Breast epithelium (tissue), 4 donors: ENCODE measurements at regions of chr18 and their contacts with region 1.

Region 1: DNA sequence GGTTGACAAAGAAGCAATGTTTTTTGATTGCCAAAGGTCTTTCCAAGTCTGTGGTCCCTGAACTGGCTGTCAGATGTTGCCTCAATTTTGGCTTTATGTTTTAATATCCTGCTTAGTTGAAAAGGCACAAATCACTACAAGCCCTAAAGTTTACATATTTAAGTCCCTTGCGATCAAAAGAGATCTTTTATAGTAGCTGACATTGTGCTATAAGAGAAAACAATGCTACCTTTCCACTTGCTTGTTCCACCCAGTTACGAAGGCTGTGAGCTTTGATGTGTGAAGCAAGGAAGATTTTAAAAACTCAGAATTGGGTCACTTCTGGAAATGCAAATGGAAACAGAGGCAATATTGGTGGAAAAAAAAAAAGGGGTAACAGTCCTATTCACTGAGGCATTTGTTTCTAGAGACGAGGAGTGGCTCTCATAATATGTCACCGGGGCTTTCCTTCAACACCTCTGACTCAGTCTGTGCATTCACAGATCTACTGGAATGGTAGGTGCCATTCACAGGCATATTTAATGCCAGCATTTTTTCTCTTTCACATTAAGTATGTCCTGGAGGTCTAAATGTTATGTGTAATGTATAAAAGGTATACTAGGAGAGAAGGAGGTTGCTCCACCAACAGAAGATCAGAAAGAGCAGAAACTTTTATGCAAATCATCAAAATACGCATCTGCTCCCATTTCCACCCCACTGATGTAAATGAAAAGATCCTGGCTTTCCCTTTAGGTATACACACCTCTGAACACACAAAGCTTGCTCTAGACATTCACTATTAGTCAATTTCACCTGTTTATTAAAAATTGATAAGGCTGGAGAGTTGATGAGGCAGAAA is 91.8 kb downstream of the TGIF1 start:
- DNase-seq: no peak
- H3K4me3 ChIP-seq: no peak overlapping the region
- H3K27ac ChIP-seq: no peak overlapping the region
- H3K4me1 ChIP-seq: peaks cover 0 to 4% of the 10 kb centered on the region in 2 donors
- H3K27me3 ChIP-seq: no peaks in the 10 kb centered on the region
- CTCF ChIP-seq: no peak
- POLR2A ChIP-seq: no peak

Region 2: DNA sequence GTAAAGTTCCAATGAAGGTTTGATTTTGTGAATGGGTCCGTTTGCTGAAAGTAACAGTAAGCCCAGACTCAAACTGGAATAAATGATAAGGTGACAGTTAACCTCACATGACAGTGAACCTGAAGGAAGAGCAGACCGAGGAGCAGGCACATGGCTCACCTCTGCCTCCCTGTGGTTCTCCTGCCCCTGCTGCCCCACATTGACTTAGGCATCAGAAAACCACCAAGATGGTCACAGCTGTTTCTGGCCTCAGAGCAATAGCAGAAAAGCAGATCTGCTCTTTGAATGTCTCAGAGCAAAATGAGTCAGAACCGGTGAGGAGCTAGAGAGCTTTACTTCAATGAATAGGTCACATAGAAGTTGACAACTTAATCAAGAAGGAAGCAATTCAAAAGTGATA is 1458.1 kb before region 1 on chr18:
- intact Hi-C with region 1: no loop called
- DNase-seq: no peak
- H3K4me3 ChIP-seq: no peak overlapping the region
- H3K27ac ChIP-seq: no peak overlapping the region
- H3K4me1 ChIP-seq: no peaks in the 10 kb centered on the region
- H3K27me3 ChIP-seq: no peaks in the 10 kb centered on the region
- CTCF ChIP-seq: no peak
- POLR2A ChIP-seq: no peak

Region 3: GRCh38 chr18:4734903-4735302 is 1193.1 kb after region 1 on chr18:
- intact Hi-C with region 1: loop called (anchors 10 kb)
- DNase-seq: no peak
- H3K4me3 ChIP-seq: no peak overlapping the region
- H3K27ac ChIP-seq: no peak overlapping the region
- H3K4me1 ChIP-seq: no peaks in the 10 kb centered on the region
- H3K27me3 ChIP-seq: no peaks in the 10 kb centered on the region
- CTCF ChIP-seq: no peak
- POLR2A ChIP-seq: no peak